RWPE1 (cell line): ENCODE measurements at regions of chr17 and their contacts with region 1.

Region 1: GRCh38 chr17:35849469-35850348 is 19.0 kb downstream of the HEATR9 start:
- DNase-seq: peak; percentile 44
- H3K27ac ChIP-seq: no peak overlapping the region
- CTCF ChIP-seq: peak; percentile 65

Region 2: GRCh38 chr17:35819456-35819855 is 30.3 kb before region 1 on chr17:
- CTCF ChIA-PET with region 1: no interaction called
- POLR2A ChIA-PET with region 1: no interaction called
- DNase-seq: no peak
- H3K27ac ChIP-seq: no peak overlapping the region
- CTCF ChIP-seq: no peak

Region 3: DNA sequence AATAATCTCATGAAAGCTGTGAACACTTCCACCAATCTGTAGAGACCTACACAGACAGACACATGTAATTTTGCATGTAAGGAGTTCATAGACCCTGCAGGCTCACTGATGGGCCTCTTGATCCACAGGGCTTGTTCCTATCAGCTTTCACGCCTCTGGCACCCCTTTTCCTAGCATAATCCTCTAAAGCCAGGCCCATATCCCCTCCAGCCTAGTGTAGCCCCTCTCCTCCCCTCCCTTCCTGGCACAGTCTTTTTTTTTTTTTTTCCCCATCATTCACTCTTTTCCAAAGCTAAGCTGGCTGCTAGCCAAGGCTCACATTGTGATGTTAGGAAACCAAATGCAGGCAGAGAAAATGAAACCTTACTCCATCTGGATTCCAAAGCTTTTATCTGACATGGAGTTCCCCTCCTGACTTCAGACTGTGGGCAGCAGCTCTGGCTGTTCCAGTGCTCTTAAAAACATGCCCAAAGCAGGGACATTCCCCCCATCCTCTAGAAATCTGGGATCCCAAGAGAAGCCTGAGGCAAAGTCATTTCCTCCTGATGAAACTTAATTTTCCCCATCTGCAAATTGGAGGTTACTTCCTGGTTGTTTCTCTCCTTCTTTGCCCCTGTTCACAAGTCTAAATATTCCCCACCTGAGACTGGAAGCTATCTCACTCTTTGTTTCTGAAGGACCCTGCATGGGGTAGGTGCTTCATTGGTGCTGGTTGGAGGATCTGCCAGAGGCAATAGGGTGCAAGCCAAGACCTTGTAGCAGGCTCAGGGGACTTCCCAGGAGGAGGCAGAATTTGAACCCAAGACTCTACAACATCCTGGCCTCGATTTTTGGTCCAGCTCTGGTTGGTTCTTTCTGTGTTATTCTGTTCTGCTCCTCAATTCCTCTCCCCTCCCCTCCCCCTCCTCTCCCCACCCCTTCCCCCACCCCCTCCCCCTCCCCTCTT is 40.4 kb after region 1 on chr17:
- CTCF ChIA-PET with region 1: no interaction called
- POLR2A ChIA-PET with region 1: interaction called, 11 read pairs
- DNase-seq: no peak
- H3K27ac ChIP-seq: no peak overlapping the region
- CTCF ChIP-seq: no peak